ENCODE measurements at regions of chr6 and their contacts with region 1.

Region 1: GRCh38 chr6:144215932-144216667 is 65.8 kb downstream of the STX11 start:
- DNase-seq: peak; percentile 84 to 96 (median 90)
- ATAC-seq: peak; percentile 84
- H3K4me3 ChIP-seq: peak overlapping the region; percentile 84
- H3K4me3 Mint-ChIP-seq: peak overlapping the region; percentile 98
- H3K27ac ChIP-seq: peak overlapping the region; percentile 73 to 82
- H3K27ac Mint-ChIP-seq: peak overlapping the region; percentile 100
- H3K4me1 ChIP-seq: peaks cover 26% of the 10 kb centered on the region
- H3K4me1 Mint-ChIP-seq: peaks cover 45% of the 10 kb centered on the region
- H3K27me3 ChIP-seq: no peaks in the 10 kb centered on the region
- H3K27me3 Mint-ChIP-seq: peaks cover 18% of the 10 kb centered on the region
- CTCF ChIP-seq: peak; percentile 78

Region 2: DNA sequence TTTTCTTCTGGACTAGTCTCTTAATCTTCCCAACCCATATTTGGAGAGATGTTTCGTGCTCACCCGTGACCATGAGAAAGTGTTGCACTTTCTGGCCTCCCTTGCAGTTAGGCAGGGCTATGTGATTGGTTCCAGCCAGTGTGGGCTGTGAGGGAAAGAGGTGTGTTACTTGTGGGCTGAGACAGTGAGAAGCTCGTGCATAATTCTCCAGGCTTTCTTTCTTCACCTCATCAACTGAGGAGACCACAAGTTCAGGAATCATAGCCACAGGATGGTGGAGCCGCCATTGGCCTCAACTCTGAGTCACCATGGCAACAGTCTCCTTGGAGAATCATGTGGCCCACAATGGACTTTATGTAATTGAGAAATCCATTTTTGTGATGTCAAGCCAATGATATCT is 647.1 kb before region 1 on chr6:
- CTCF ChIA-PET with region 1: no interaction called
- POLR2A ChIA-PET with region 1: no interaction called
- intact Hi-C with region 1: loop called (anchors 5 to 10 kb)
- DNase-seq: peak in 3 of 14 experiments; percentile 32 to 50 (median 40)
- ATAC-seq: no peak
- H3K4me3 ChIP-seq: no peak overlapping the region
- H3K4me3 Mint-ChIP-seq: no peak overlapping the region
- H3K27ac ChIP-seq: no peak overlapping the region
- H3K27ac Mint-ChIP-seq: peak overlapping the region; percentile 31
- H3K4me1 ChIP-seq: peaks cover 10% of the 10 kb centered on the region
- H3K4me1 Mint-ChIP-seq: peaks cover 16% of the 10 kb centered on the region
- H3K27me3 ChIP-seq: no peaks in the 10 kb centered on the region
- H3K27me3 Mint-ChIP-seq: no peaks in the 10 kb centered on the region
- CTCF ChIP-seq: no peak

Region 3: GRCh38 chr6:143940011-143940597 is 276.0 kb before region 1 on chr6:
- CTCF ChIA-PET with region 1: interaction called, 5 read pairs
- POLR2A ChIA-PET with region 1: interaction called, 3 read pairs
- intact Hi-C with region 1: loop called (anchors 5 kb)
- DNase-seq: peak; percentile 34 to 79 (median 44)
- ATAC-seq: peak; percentile 97
- H3K4me3 ChIP-seq: no peak overlapping the region
- H3K4me3 Mint-ChIP-seq: no peak overlapping the region
- H3K27ac ChIP-seq: no peak overlapping the region
- H3K27ac Mint-ChIP-seq: no peak overlapping the region
- H3K4me1 ChIP-seq: peaks cover 8% of the 10 kb centered on the region
- H3K4me1 Mint-ChIP-seq: peaks cover 6% of the 10 kb centered on the region
- H3K27me3 ChIP-seq: no peaks in the 10 kb centered on the region
- H3K27me3 Mint-ChIP-seq: no peaks in the 10 kb centered on the region
- CTCF ChIP-seq: peak; percentile 86

Region 4: GRCh38 chr6:144095331-144096002 is 120.6 kb before region 1 on chr6 and contains the start of gene SF3B5:
- CTCF ChIA-PET with region 1: interaction called, 5 read pairs
- POLR2A ChIA-PET with region 1: interaction called, 6 read pairs
- intact Hi-C with region 1: loop called in 1 of 2 experiments (anchors 1 kb)
- DNase-seq: peak; percentile 93 to 100 (median 97)
- ATAC-seq: peak; percentile 96
- H3K4me3 ChIP-seq: peak within 1 kb of the TSS; percentile 83
- H3K4me3 Mint-ChIP-seq: peak within 1 kb of the TSS; percentile 98
- H3K27ac ChIP-seq: peak within 1 kb of the TSS; percentile 84 to 94
- H3K27ac Mint-ChIP-seq: peak within 1 kb of the TSS; percentile 96
- H3K4me1 ChIP-seq: peaks cover 24% of the 10 kb centered on the region
- H3K4me1 Mint-ChIP-seq: peaks cover 30% of the 10 kb centered on the region
- H3K27me3 ChIP-seq: no peaks in the 10 kb centered on the region
- H3K27me3 Mint-ChIP-seq: no peaks in the 10 kb centered on the region
- CTCF ChIP-seq: no peak
- total RNA-seq, gene SF3B5: 113 to 124 TPM

Region 5: GRCh38 chr6:144149891-144150709 is 66.0 kb before region 1 on chr6 and contains the start of gene STX11:
- CTCF ChIA-PET with region 1: interaction called, 5 read pairs
- POLR2A ChIA-PET with region 1: interaction called, 10 read pairs
- intact Hi-C with region 1: loop called (anchors 1 to 2 kb)
- DNase-seq: peak; percentile 46 to 92 (median 63)
- ATAC-seq: peak; percentile 67
- H3K4me3 ChIP-seq: peak within 1 kb of the TSS; percentile 78
- H3K4me3 Mint-ChIP-seq: peak within 1 kb of the TSS; percentile 92
- H3K27ac ChIP-seq: peak within 1 kb of the TSS; percentile 54 to 74
- H3K27ac Mint-ChIP-seq: peak within 1 kb of the TSS; percentile 83
- H3K4me1 ChIP-seq: peaks cover 20% of the 10 kb centered on the region
- H3K4me1 Mint-ChIP-seq: peaks cover 31% of the 10 kb centered on the region
- H3K27me3 ChIP-seq: no peaks in the 10 kb centered on the region
- H3K27me3 Mint-ChIP-seq: no peaks in the 10 kb centered on the region
- CTCF ChIP-seq: no peak
- total RNA-seq, gene STX11: 16.1 to 16.8 TPM

Region 6: DNA sequence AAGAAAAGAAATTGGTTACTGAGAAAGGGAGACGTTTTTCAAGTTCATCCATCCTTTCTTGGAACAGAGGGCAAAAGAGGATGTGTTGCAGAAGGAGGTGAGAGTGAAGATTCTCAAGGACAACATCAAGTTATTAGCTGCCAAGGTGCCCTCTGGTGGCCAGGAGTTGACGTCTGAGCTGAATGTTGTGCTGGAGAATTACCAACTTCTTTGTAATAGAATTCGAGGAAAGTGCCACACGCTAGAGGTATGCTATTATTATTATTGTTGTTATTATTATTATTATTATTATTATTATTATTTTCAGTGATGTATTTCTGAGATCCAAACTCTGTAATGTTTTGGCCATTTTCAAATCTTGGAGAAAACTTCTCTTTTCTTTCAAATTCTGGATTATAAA is 266.0 kb after region 1 on chr6:
- CTCF ChIA-PET with region 1: interaction called, 3 read pairs
- POLR2A ChIA-PET with region 1: interaction called, 4 read pairs
- intact Hi-C with region 1: loop called (anchors 5 kb)
- DNase-seq: peak; percentile 55 to 81 (median 68)
- ATAC-seq: peak; percentile 77
- H3K4me3 ChIP-seq: no peak overlapping the region
- H3K4me3 Mint-ChIP-seq: no peak overlapping the region
- H3K27ac ChIP-seq: no peak overlapping the region
- H3K27ac Mint-ChIP-seq: peak overlapping the region; percentile 31
- H3K4me1 ChIP-seq: no peaks in the 10 kb centered on the region
- H3K4me1 Mint-ChIP-seq: no peaks in the 10 kb centered on the region
- H3K27me3 ChIP-seq: no peaks in the 10 kb centered on the region
- H3K27me3 Mint-ChIP-seq: no peaks in the 10 kb centered on the region
- CTCF ChIP-seq: peak; percentile 82

Region 7: DNA sequence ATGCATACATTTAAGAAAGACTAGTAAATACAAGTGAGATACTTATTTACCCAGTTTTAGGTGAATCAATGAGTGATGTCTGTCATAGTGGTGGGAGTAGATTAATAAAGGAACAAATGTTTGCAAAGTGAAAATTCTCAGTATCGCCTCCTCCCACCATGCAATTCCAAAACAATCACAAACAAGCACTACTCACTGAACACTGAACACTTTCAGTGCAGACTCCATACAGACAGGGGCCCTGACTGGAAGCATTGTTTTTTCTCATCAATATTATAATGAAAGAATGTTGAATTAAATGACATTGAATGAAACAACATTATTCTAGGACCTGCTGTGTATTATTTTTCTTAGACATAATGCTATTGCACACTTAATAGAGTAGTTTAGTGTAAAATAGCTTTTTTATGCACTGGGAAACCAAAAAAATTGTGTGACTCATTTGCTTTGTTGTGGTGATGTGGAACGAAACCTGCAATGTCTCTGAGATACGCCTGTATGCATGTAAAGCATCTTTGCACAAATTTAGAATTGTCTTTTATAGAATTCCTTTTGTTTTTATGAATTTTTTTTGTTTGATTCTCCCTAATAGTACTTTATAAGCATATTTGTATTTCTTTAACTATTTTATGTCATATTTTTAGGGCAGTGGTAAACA is 386.6 kb after region 1 on chr6:
- CTCF ChIA-PET with region 1: no interaction called
- POLR2A ChIA-PET with region 1: no interaction called
- intact Hi-C with region 1: no loop called
- DNase-seq: peak in 3 of 14 experiments; percentile 26 to 40 (median 30)
- ATAC-seq: peak; percentile 64
- H3K4me3 ChIP-seq: no peak overlapping the region
- H3K4me3 Mint-ChIP-seq: no peak overlapping the region
- H3K27ac ChIP-seq: no peak overlapping the region
- H3K27ac Mint-ChIP-seq: no peak overlapping the region
- H3K4me1 ChIP-seq: peaks cover 4% of the 10 kb centered on the region
- H3K4me1 Mint-ChIP-seq: peaks cover 72% of the 10 kb centered on the region
- H3K27me3 ChIP-seq: no peaks in the 10 kb centered on the region
- H3K27me3 Mint-ChIP-seq: no peaks in the 10 kb centered on the region
- CTCF ChIP-seq: no peak

Region 8: GRCh38 chr6:145015739-145016558 is 799.8 kb after region 1 on chr6:
- CTCF ChIA-PET with region 1: no interaction called
- POLR2A ChIA-PET with region 1: no interaction called
- intact Hi-C with region 1: no loop called
- DNase-seq: peak in 2 of 14 experiments; percentile 11 to 31
- ATAC-seq: no peak
- H3K4me3 ChIP-seq: no peak overlapping the region
- H3K4me3 Mint-ChIP-seq: no peak overlapping the region
- H3K27ac ChIP-seq: no peak overlapping the region
- H3K27ac Mint-ChIP-seq: no peak overlapping the region
- H3K4me1 ChIP-seq: no peaks in the 10 kb centered on the region
- H3K4me1 Mint-ChIP-seq: no peaks in the 10 kb centered on the region
- H3K27me3 ChIP-seq: no peaks in the 10 kb centered on the region
- H3K27me3 Mint-ChIP-seq: no peaks in the 10 kb centered on the region
- CTCF ChIP-seq: no peak